ENCODE measurements at regions of chr19 and their contacts with region 1.

Region 1: GRCh38 chr19:54882758-54883157 is 8.7 kb downstream of the FCAR start:
- DNase-seq: no peak
- ATAC-seq: no peak
- H3K4me3 Mint-ChIP-seq: no peak overlapping the region
- H3K27ac Mint-ChIP-seq: no peak overlapping the region
- H3K4me1 Mint-ChIP-seq: peaks cover 26% of the 10 kb centered on the region
- H3K27me3 Mint-ChIP-seq: peaks cover 18% of the 10 kb centered on the region
- CTCF ChIP-seq: no peak

Region 2: GRCh38 chr19:54573330-54573872 is 309.4 kb before region 1 on chr19 and contains the start of gene LILRA2:
- CTCF ChIA-PET with region 1: no interaction called
- POLR2A ChIA-PET with region 1: no interaction called
- DNase-seq: no peak
- ATAC-seq: no peak
- H3K4me3 Mint-ChIP-seq: no peak within 1 kb of the TSS
- H3K27ac Mint-ChIP-seq: no peak within 1 kb of the TSS
- H3K4me1 Mint-ChIP-seq: 0 out of 2 replicates have a peak, but pooled peaks cover 2% of the 10 kb centered on the region
- H3K27me3 Mint-ChIP-seq: peaks cover under 1% of the 10 kb centered on the region
- CTCF ChIP-seq: no peak
- total RNA-seq, gene LILRA2: not detected in 3 replicates

Region 3: GRCh38 chr19:54696117-54696548 is 186.6 kb before region 1 on chr19:
- CTCF ChIA-PET with region 1: no interaction called
- POLR2A ChIA-PET with region 1: no interaction called
- DNase-seq: no peak
- ATAC-seq: no peak
- H3K4me3 Mint-ChIP-seq: no peak overlapping the region
- H3K27ac Mint-ChIP-seq: no peak overlapping the region
- H3K4me1 Mint-ChIP-seq: no peaks in the 10 kb centered on the region
- H3K27me3 Mint-ChIP-seq: peaks cover 15% of the 10 kb centered on the region
- CTCF ChIP-seq: no peak

Region 4: GRCh38 chr19:54803410-54803809 is 79.3 kb before region 1 on chr19 and contains the start of gene KIR2DL4:
- CTCF ChIA-PET with region 1: no interaction called
- POLR2A ChIA-PET with region 1: no interaction called
- DNase-seq: no peak
- ATAC-seq: no peak
- H3K4me3 Mint-ChIP-seq: no peak within 1 kb of the TSS
- H3K27ac Mint-ChIP-seq: no peak within 1 kb of the TSS
- H3K4me1 Mint-ChIP-seq: no peaks in the 10 kb centered on the region
- H3K27me3 Mint-ChIP-seq: peaks cover 8% of the 10 kb centered on the region
- CTCF ChIP-seq: no peak
- total RNA-seq, gene KIR2DL4: not detected in 3 replicates

Region 5: DNA sequence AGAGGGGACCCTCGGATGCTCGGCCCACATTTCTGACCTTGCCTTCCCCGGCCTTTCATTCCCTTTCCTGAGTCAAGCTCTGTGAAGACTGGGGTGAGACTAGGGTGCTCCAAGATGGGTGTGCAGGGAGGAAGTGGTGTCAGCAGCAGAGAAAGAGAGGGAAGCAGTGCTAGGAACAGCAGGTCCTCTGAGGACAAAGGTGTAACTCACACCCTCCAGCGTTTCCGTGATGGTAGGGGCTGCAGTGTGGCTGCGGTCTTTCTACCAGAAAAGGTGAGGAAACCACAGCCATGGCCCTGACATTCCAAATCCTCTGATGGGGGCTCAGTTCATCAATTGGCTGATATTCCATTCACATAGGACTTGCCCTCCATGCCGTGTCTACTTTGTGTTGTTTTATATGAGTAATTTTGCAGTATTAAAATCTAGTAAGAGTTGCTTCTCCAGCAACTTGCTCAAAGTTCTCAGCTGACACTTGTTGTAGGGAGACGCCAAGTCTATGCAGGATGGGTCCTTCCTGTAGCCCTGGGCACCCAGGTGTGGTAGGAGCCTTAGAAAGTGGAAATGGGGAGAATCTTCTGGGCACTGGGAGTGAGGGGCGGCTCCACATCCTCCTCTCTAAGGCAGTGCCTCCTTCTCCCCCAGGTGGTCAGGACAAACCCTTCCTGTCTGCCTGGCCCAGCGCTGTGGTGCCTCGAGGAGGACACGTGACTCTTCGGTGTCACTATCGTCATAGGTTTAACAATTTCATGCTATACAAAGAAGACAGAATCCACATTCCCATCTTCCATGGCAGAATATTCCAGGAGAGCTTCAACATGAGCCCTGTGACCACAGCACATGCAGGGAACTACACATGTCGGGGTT is 64.9 kb before region 1 on chr19:
- CTCF ChIA-PET with region 1: no interaction called
- POLR2A ChIA-PET with region 1: no interaction called
- DNase-seq: no peak
- ATAC-seq: no peak
- H3K4me3 Mint-ChIP-seq: no peak overlapping the region
- H3K27ac Mint-ChIP-seq: no peak overlapping the region
- H3K4me1 Mint-ChIP-seq: no peaks in the 10 kb centered on the region
- H3K27me3 Mint-ChIP-seq: peaks cover 15% of the 10 kb centered on the region
- CTCF ChIP-seq: no peak

Region 6: DNA sequence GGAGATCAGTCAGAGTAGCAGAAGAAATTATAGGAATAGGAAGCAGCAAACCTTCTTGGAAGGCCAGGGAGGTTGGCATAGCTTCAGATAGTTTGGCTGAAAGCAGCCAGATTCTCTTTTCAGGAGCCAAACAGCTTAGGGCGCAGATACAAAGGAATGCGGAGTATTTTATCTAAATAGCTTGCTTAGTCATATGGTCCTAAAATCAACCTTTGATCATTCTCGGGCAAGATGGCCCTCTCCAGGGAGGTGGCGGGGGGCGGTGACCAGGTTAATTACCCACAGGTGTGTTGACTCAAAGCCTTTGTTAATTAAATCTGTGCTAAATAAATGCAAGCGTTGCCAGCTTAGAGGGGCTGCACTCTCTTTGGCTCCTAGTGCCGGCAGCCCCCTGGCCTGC is 10.6 kb after region 1 on chr19:
- CTCF ChIA-PET with region 1: interaction called, 26 read pairs
- POLR2A ChIA-PET with region 1: interaction called, 5 read pairs
- DNase-seq: peak; percentile 89
- ATAC-seq: peak; percentile 92
- H3K4me3 Mint-ChIP-seq: peak overlapping the region; percentile 56
- H3K27ac Mint-ChIP-seq: peak overlapping the region; percentile 100
- H3K4me1 Mint-ChIP-seq: peaks cover 68% of the 10 kb centered on the region
- H3K27me3 Mint-ChIP-seq: peaks cover 10% of the 10 kb centered on the region
- CTCF ChIP-seq: no peak

Region 7: GRCh38 chr19:54937926-54938325 is 55.2 kb after region 1 on chr19:
- CTCF ChIA-PET with region 1: interaction called, 25 read pairs
- POLR2A ChIA-PET with region 1: no interaction called
- DNase-seq: no peak
- ATAC-seq: no peak
- H3K4me3 Mint-ChIP-seq: no peak overlapping the region
- H3K27ac Mint-ChIP-seq: no peak overlapping the region
- H3K4me1 Mint-ChIP-seq: peaks cover 9% of the 10 kb centered on the region
- H3K27me3 Mint-ChIP-seq: no peaks in the 10 kb centered on the region
- CTCF ChIP-seq: no peak

Region 8: GRCh38 chr19:55034751-55035150 is 152.0 kb after region 1 on chr19:
- CTCF ChIA-PET with region 1: interaction called, 14 read pairs
- POLR2A ChIA-PET with region 1: no interaction called
- DNase-seq: no peak
- ATAC-seq: no peak
- H3K4me3 Mint-ChIP-seq: no peak overlapping the region
- H3K27ac Mint-ChIP-seq: no peak overlapping the region
- H3K4me1 Mint-ChIP-seq: peaks cover 3% of the 10 kb centered on the region; the same call in 1 of the 2 replicates
- H3K27me3 Mint-ChIP-seq: no peaks in the 10 kb centered on the region
- CTCF ChIP-seq: no peak

Region 9: GRCh38 chr19:55068950-55069855 is 186.4 kb after region 1 on chr19:
- CTCF ChIA-PET with region 1: interaction called, 12 read pairs
- POLR2A ChIA-PET with region 1: no interaction called
- DNase-seq: peak; percentile 50
- ATAC-seq: peak; percentile 84
- H3K4me3 Mint-ChIP-seq: peak overlapping the region; percentile 79
- H3K27ac Mint-ChIP-seq: peak overlapping the region; percentile 82
- H3K4me1 Mint-ChIP-seq: peaks cover 34% of the 10 kb centered on the region
- H3K27me3 Mint-ChIP-seq: peaks cover 96% of the 10 kb centered on the region
- CTCF ChIP-seq: no peak

Region 10: DNA sequence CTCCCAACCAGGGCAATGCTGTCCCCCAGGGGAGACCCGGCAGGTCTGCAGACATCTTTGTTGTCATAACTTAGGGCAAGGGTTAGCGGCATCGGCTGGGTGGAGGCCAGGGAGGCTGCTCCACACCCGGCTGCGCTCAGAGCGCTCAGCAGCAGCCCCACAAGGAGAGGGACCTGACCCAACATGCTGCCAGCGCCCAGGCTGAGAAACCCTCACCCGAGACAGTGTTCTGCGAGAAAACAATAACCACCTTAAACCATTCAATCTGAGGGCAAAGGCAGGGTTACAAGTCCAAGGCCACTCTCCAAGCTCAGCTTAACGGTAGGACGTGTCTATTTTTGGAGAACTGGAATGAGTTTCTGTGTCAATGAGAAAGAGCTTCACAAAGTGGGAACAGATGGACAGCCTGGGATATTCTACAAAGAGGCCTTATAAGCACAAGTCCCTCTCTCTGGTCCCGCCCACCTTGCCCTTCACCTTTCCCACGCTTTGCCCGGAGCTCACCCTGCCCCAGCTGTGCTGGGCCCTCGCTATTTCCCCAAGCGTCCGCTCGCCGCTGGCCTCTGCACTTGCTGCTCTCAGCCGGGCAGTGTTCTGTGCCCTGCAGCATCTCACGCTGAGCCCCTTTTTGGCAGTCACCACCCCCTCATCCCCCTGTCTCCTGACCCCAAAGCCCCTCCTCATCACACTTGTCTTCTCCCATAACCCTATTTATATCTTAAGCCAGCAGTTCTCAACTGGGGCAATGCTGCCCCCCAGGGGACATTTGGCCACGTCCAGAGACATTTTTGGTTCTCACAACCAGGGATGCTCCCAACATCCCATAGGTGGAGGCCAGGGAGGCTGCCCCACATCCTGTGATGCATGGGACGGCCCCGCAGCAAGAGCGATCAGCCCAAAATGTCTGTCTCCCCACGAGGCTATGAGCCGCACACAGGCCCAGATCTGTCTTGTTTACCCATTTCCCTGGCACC is 217.1 kb after region 1 on chr19:
- CTCF ChIA-PET with region 1: interaction called, 23 read pairs
- POLR2A ChIA-PET with region 1: no interaction called
- DNase-seq: peak; percentile 73
- ATAC-seq: peak; percentile 36
- H3K4me3 Mint-ChIP-seq: no peak overlapping the region
- H3K27ac Mint-ChIP-seq: 0 out of 2 replicates have a peak overlapping the region, but pooled peaks have one; percentile 87
- H3K4me1 Mint-ChIP-seq: peaks cover 10% of the 10 kb centered on the region
- H3K27me3 Mint-ChIP-seq: no peaks in the 10 kb centered on the region; the same call in 1 of the 2 replicates
- CTCF ChIP-seq: no peak